Gastrocnemius medialis (tissue), 4 donors: ENCODE measurements at regions of chr7 and their contacts with region 1.

Region 1: DNA sequence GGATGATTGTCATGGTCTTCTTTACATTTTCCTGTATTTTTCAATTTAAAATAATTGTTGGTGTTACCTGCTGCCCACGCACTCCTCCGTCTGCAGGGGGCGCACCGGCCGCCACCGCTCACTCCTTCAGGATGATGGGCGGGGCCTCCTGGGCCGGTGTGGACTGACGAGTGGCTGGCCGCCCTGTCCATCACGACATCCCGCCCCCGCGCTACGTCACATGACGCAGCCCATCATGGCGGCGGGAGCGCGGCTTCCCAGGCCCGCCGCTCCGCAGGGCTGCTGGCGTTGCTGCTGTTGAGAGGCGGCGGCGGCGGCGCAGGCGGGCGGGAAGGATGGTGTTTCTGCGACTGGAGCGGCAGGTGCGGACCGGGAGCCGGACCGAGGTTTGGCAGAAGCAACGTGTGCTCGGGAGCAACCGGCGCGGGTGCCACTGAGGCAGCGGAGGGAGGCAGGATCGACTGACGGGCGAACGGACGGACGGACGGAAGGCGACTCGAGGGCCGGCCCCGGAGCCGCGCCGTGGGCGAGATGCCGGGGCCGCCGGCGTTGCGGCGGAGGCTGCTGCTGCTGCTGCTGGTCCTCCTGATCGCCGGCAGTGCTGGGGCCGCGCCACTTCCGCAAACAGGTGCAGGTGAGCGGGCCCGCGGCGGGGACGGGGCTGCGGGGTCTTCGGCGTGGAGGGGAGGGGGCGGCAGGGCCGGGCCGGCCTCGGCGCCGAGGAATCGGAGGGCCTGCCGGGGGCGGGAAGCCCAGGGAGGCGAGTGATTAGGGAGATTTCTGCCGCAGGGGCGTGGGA is at the start of gene LMTK2:
- DNase-seq: peak; percentile 89 to 92
- ATAC-seq: peak; percentile 96 to 98
- H3K4me3 ChIP-seq: peak within 1 kb of the TSS; percentile 81 to 98 (median 87)
- H3K27ac ChIP-seq: peak within 1 kb of the TSS; percentile 84 to 93 (median 87)
- H3K4me1 ChIP-seq: peaks cover 29 to 34% of the 10 kb centered on the region in 2 donors
- H3K27me3 ChIP-seq: no peaks in the 10 kb centered on the region
- CTCF ChIP-seq: peak; percentile 94 to 97 (median 95)
- POLR2A ChIP-seq: peak; percentile 95 to 96
- total RNA-seq, gene LMTK2: 10.8 to 44.2 (median 17.7) TPM

Region 2: DNA sequence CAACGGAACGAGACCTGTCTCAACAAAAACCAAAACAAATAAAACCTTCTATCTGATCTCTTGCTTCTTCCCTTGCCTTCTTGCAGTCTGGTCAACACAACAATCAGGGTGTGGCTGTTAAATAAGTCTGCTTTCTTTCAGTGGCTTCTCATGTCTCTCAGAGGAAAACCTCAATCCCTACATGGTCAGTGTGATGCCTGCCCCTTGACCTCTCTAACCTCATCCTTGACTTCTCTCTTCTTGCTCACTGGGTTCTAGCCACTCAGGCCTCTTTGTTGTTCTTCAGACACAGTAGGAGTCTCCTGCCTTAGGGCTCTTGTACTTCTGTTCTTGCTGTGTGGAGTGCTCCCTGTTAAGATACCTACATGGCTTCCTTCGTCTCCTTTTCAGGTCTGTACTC is 769.0 kb before region 1 on chr7:
- in situ Hi-C with region 1: no loop called
- intact Hi-C with region 1: no loop called
- DNase-seq: no peak
- ATAC-seq: no peak
- H3K4me3 ChIP-seq: no peak overlapping the region
- H3K27ac ChIP-seq: no peak overlapping the region
- H3K4me1 ChIP-seq: no peaks in the 10 kb centered on the region
- H3K27me3 ChIP-seq: no peaks in the 10 kb centered on the region
- CTCF ChIP-seq: no peak
- POLR2A ChIP-seq: no peak

Region 3: GRCh38 chr7:98157761-98158160 is 50.9 kb after region 1 on chr7:
- in situ Hi-C with region 1: loop called in 3 of 4 experiments (anchors 5 kb)
- intact Hi-C with region 1: no loop called
- DNase-seq: no peak
- ATAC-seq: no peak
- H3K4me3 ChIP-seq: no peak overlapping the region
- H3K27ac ChIP-seq: no peak overlapping the region
- H3K4me1 ChIP-seq: no peaks in the 10 kb centered on the region
- H3K27me3 ChIP-seq: no peaks in the 10 kb centered on the region
- CTCF ChIP-seq: no peak
- POLR2A ChIP-seq: no peak

Region 4: DNA sequence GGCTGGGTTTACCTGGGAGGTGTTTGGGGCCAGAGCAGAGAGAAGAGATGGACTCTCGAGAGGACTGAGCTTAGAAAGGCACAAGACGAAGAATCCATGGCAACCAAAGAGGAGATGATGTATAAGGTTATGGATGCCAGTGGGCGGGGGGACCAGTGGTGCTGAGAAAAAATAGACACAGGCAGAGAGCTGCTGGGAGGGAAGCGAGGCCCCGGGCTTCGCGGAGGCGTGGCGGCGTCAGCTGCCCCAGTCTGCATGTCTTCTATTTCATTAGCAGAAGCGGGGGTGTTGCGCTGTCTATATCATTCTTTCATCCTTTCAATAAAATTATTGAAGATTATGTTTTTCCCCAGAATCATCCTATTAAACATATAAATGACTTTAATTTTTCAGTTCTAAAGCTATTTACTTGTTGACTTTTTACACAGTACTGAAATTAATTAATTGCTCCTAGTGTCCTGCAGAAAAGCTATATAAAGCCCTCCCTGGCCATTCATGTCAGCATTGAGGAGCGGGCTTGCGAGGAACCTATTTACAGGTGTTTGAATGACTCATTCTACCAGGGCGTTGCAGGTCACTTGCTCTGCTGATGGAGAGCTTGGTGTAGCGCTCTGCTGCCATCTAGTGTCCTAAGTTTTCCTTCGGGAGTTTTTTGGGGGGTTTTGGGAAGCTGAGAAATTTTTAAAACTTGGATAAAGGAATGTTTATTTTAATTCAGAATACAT is 61.5 kb after region 1 on chr7:
- in situ Hi-C with region 1: loop called in 3 of 4 experiments (anchors 5 kb)
- intact Hi-C with region 1: loop called (anchors 1 kb)
- DNase-seq: peak; percentile 72 to 77
- ATAC-seq: peak; percentile 92 to 97
- H3K4me3 ChIP-seq: no peak overlapping the region
- H3K27ac ChIP-seq: peak overlapping the region; percentile 5 to 90 (median 79)
- H3K4me1 ChIP-seq: peaks cover 22 to 23% of the 10 kb centered on the region in 2 donors
- H3K27me3 ChIP-seq: no peaks in the 10 kb centered on the region
- CTCF ChIP-seq: peak; percentile 77 to 94 (median 81)
- POLR2A ChIP-seq: no peak

Region 5: DNA sequence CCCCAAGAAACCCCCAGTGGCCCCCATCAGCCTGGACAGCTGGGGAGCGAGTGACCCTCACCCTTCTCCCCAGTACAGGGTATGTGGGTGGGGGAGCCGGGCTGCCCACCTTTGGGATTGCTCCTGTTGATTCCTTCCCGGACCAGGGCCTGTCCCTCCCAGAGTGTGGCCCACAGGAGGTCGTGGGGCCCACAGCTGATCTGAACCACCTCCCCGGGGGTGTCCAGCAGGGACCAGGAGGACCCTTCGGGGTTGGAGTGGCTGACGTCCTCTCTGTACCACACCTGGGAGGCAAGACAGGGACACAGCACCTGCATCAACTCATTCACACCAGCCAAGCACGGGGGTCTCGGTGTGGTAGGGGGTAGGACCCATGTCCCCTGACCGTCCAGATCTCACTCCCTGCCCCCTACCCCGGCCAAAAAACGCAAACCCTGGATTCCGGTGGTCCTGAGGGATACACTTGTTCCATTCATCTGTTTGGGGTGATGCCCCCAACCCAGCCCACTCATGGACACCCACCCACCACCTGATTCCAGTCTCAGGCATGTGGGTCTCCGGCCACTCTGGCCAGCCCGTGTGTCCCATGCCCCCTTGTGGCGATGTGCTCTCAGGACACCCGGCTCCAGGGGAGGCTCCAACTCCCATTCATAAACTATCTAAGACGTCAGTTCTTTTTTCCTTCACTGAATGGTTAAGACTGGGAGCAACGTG is 134.3 kb after region 1 on chr7:
- in situ Hi-C with region 1: loop called in 1 of 4 experiments (anchors 25 kb)
- intact Hi-C with region 1: no loop called
- DNase-seq: no peak
- ATAC-seq: peak; percentile 55 to 63
- H3K4me3 ChIP-seq: no peak overlapping the region
- H3K27ac ChIP-seq: no peak overlapping the region
- H3K4me1 ChIP-seq: no peaks in the 10 kb centered on the region
- H3K27me3 ChIP-seq: no peaks in the 10 kb centered on the region
- CTCF ChIP-seq: peak; percentile 25 to 75 (median 67)
- POLR2A ChIP-seq: no peak

Region 6: GRCh38 chr7:98251841-98252639 is 145.2 kb after region 1 on chr7 and contains the start of gene TECPR1:
- in situ Hi-C with region 1: loop called in 2 of 4 experiments (anchors 25 kb)
- intact Hi-C with region 1: loop called (anchors 5 kb)
- DNase-seq: peak; percentile 94 to 95
- ATAC-seq: peak; percentile 94 to 96
- H3K4me3 ChIP-seq: peak within 1 kb of the TSS; percentile 74 to 93 (median 86)
- H3K27ac ChIP-seq: peak within 1 kb of the TSS; percentile 85 to 94 (median 88)
- H3K4me1 ChIP-seq: peaks cover 18 to 28% of the 10 kb centered on the region in 2 donors
- H3K27me3 ChIP-seq: no peaks in the 10 kb centered on the region
- CTCF ChIP-seq: peak in 1 of 5 experiments; percentile 18
- POLR2A ChIP-seq: peak; percentile 45 to 60
- total RNA-seq, gene TECPR1: 16.0 to 59.6 (median 33.9) TPM

Region 7: DNA sequence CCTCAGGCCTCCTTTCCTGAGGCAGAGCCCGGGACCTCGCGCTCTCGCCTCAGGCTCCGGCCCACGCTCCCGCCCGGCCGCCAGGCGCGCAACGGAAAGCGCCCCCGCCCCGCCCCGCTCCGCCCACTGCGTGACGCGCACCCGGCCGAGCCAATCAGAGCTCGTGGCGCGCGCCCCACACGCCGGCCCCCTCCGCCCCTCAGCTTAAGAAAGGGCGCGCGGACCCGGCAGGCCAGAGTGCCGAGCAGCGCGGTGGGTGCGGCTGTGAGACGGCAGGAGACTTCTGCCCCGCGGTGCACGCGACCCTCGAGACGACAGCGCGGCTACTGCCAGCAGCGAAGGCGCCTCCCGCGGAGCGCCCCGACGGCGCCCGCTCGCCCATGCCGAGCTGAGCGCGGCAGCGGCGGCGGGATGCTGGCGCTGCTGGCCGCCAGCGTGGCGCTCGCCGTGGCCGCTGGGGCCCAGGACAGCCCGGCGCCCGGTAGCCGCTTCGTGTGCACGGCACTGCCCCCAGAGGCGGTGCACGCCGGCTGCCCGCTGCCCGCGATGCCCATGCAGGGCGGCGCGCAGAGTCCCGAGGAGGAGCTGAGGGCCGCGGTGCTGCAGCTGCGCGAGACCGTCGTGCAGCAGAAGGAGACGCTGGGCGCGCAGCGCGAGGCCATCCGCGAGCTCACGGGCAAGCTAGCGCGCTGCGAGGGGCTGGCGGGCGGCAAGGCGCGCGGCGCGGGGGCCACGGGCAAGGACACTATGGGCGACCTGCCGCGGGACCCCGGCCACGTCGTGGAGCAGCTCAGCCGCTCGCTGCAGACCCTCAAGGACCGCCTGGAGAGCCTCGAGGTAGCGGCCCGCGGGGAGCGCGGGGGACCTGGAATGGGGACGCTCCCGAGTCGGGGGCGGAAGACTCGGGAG is 510.5 kb after region 1 on chr7 and contains the start of gene NPTX2:
- in situ Hi-C with region 1: no loop called
- intact Hi-C with region 1: no loop called
- DNase-seq: peak in 1 of 2 donors; percentile 17
- ATAC-seq: peak; percentile 48 to 66
- H3K4me3 ChIP-seq: peak within 1 kb of the TSS; percentile 39 to 53 (median 43)
- H3K27ac ChIP-seq: peak within 1 kb of the TSS in 3 of 4 donors; percentile 55 to 69 (median 55)
- H3K4me1 ChIP-seq: peaks cover 0 to 7% of the 10 kb centered on the region in 2 donors
- H3K27me3 ChIP-seq: peaks cover 29 to 50% (median 37%) of the 10 kb centered on the region in 3 donors
- CTCF ChIP-seq: no peak
- POLR2A ChIP-seq: peak; percentile 37 to 73
- total RNA-seq, gene NPTX2: 9.6 to 22.7 (median 16.6) TPM

Region 8: DNA sequence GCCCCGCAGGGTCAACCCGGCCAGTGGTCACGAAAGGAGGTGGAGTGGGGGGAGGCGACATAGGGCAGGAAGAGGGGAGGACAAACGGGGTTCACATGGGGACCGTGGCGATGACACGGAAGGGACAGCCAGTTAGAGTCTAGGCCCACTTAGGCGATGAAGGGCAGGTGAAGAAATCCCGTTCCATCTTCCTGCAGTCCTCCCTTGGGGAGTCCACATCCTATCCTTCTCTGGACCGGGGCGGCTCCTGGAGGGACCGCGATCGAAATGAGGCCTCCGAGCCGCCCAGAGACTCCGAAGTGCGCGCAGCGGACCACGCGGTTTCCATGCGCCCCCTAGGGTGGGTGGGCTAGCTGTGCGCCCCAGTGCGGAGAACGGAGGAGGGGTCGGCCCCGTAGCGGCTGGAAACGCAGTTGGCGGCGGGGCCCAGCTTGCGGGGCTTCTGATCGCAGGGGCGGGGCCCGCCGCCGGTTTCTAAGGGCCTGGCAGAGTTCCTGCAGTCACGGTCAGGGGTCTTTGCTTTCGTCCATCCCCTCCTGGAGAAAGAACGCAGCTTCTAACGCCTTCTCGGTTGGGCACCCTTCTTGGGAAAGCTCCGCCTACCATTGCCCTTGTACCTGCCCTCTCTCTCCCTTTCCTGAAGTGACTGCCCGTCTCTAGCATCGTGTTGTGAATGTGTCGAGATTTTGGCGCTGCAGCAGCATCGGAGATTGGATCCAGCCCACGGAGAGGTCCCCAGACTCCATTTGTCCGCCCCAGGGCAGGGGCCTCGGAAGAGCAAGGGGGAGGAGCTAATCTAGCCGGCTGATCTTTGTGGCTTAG is 1473.3 kb after region 1 on chr7:
- in situ Hi-C with region 1: no loop called
- intact Hi-C with region 1: no loop called
- DNase-seq: no peak
- ATAC-seq: peak; percentile 29 to 31
- H3K4me3 ChIP-seq: peak overlapping the region; percentile 62 to 74 (median 70)
- H3K27ac ChIP-seq: peak overlapping the region in 1 of 4 donors; percentile 53
- H3K4me1 ChIP-seq: peaks cover 26 to 27% of the 10 kb centered on the region in 2 donors
- H3K27me3 ChIP-seq: no peaks in the 10 kb centered on the region
- CTCF ChIP-seq: peak in 2 of 5 experiments; percentile 18 to 49
- POLR2A ChIP-seq: no peak